ENCODE measurements at regions of chr1 and their contacts with region 1.

Region 1: DNA sequence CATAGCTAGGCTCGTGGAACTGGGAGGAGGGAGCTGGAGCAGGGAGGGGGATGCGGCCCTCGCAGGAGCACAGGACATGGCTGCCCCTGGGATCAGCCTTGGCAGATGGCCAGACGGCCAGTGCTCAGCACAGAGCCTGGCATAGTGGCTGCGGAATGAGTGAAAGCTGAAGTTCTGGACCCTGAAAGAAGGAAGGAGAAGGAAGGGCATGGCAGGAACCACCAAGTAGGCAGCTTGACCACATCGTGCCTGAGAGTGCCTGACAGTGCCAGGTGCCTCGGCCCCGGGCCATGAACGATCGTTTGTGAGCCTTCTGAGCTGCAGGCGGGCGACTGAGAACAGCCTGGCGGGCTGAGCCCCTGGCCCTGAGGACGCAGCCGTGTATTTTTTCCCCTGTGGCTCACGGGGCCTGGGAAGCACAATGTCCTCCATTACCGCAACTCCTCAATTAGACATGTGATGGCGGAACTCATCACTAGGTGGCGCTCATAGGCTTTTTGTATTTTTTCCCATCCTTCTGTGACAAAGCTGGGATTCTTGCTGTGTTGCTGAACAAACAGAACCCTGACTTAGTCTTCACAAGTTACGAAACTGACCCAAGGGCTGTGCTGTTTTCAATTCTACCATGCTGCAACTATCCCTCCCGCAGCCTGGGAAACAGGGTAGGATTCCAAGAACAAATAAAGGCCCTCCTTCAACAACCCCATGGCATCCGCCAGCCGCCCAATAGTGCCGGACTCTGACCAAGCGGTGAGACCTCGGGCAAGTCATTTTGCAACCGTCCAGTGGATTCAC is 29.9 kb upstream of the TMEM61 start:
- DNase-seq: peak; percentile 40 to 89 (median 72)
- H3K4me3 ChIP-seq: peak overlapping the region in 39 of 59 donors; percentile 1 to 59 (median 32)
- H3K27ac ChIP-seq: peak overlapping the region in 57 of 59 donors; percentile 10 to 95 (median 81)
- H3K27me3 ChIP-seq: no peaks in the 10 kb centered on the region
- CTCF ChIP-seq: peak; percentile 69 to 93 (median 84)

Region 2: DNA sequence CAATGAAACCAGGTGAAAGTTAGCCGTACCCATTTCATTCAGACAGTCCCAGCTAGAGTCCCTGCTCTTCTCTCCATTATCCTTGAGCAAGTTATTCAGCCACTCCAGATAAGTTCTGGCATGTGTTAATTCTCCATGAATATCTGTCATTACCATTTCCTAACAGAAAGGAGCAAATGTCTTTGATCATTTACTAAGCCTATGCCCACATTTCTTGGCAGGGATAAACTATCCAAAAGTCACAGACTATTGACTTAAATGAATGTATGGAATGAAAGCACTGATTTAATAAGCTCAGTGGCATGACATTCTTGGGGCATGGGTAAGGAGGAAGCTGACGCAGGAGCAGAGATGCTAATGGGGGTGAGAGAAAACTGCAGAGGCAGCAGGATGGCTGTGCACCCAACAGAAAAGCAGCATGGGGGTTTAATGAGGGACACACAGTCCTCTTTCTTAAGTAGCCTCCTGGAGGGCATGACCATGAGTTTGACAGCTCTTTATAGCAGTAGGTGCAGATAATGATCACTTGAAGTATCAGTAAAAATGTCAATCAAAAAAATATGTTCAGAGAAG is 46.0 kb before region 1 on chr1:
- intact Hi-C with region 1: no loop called
- DNase-seq: no peak
- H3K4me3 ChIP-seq: no peak overlapping the region
- H3K27ac ChIP-seq: no peak overlapping the region
- H3K27me3 ChIP-seq: no peaks in the 10 kb centered on the region
- CTCF ChIP-seq: no peak

Region 3: GRCh38 chr1:54996359-54996868 is 45.8 kb after region 1 on chr1:
- intact Hi-C with region 1: loop called (anchors 2 kb)
- DNase-seq: peak; percentile 35 to 75 (median 55)
- H3K4me3 ChIP-seq: peak overlapping the region in 12 of 59 donors; percentile 6 to 38 (median 16)
- H3K27ac ChIP-seq: no peak overlapping the region
- H3K27me3 ChIP-seq: peaks cover 0 to 54% (median 26%) of the 10 kb centered on the region in 45 donors
- CTCF ChIP-seq: peak; percentile 34 to 84 (median 73)

Region 4: DNA sequence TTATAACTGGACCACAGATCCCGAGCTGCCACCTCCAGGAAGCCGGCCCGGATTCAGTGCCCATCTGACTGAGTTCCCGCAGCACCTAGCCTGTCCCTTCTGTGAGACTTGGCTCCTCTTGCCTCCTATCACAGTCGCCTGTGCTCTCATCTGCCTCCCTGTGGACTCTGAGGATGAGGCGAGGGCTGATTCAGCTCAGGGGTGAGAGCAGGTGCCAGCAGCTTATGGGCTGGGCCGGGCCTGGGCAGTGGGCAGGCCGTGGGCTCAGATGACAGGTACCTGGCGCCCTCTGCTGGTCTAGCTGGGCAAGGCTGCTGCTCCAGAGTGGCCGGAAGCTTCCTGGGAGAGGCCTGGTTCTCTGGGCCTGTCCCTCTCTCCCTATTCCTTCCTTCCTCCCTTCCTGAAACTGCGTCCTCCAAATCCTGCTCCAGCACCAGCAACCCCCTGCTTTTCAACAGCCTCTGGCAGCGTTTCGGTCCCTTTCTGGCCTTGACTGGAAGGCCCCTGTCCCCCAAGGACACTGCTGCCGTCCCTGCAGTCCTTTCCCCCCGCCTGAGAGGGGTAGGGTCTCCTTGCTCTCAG is 71.5 kb after region 1 on chr1:
- intact Hi-C with region 1: loop called in 1 of 2 experiments (anchors 2 kb)
- DNase-seq: peak; percentile 70 to 86 (median 80)
- H3K4me3 ChIP-seq: no peak overlapping the region
- H3K27ac ChIP-seq: no peak overlapping the region
- H3K27me3 ChIP-seq: peaks cover 0 to 5% (median 0%) of the 10 kb centered on the region in 45 donors
- CTCF ChIP-seq: peak; percentile 35 to 86 (median 78)